Activated T-helper 1 cell treated with anti-CD3 and anti-CD28 coated beads, Interleukin-12 subunit alpha, Interleukin-12 subunit beta, Interleukin-2, Interleukin-4 antibody, amounts not matched to agents 30 ng/mL and 10 ng/mL and 1 ng/mL, durations not matched to agents 14 hours and 24 hours and 36 hours (primary cell): ENCODE measurements at regions of chr17 and their contacts with region 1.

Region 1: DNA sequence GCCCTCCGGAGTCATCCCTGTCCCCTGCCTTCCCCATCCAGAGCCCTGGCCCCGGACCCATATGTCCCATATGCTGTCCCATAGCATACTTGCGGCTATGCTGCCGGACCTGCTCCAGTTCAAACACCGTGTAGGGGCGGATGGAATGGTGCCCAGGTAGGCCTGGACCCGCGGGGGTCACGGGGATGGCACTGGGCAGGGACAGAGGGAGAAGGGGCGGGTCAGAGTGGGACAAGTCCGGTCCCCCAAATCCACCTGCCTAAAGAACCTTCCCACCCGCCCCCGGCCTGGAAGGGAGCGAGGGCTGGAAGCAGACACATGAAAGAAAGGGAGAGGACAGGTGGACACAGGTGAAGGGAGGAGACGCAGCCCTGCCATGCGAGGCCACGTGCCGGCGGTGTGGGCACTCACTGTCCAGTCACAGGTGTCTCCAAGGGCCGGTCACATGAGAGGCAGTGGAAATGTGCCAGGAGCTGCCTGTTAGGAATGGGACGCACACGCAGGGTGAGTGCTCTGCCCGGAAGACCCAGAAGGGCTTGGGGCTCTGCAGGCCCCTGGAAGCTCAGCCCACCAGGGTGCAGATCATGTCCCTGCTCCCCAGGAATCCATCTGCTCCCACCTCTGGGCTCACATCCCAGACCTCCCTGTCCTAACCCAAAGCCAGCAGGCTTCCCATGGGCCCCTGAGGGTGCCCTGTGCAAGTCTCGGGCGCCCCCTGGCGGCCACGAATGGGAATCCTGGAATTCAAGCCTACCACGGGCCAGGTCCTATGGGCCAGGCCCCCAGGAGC is 14.0 kb downstream of the UBALD2 start:
- DNase-seq: peak; percentile 76
- H3K4me3 Mint-ChIP-seq: no peak overlapping the region
- H3K27ac Mint-ChIP-seq: no peak overlapping the region
- H3K4me1 Mint-ChIP-seq: peaks cover under 1% of the 10 kb centered on the region
- H3K27me3 Mint-ChIP-seq: no peaks in the 10 kb centered on the region

Region 2: GRCh38 chr17:75904749-75905521 is 374.2 kb before region 1 on chr17 and contains the start of gene MRPL38:
- intact Hi-C with region 1: loop called (anchors 10 kb)
- DNase-seq: peak; percentile 96
- H3K4me3 Mint-ChIP-seq: peak within 1 kb of the TSS; percentile 99
- H3K27ac Mint-ChIP-seq: peak within 1 kb of the TSS; percentile 84
- H3K4me1 Mint-ChIP-seq: peaks cover 12% of the 10 kb centered on the region
- H3K27me3 Mint-ChIP-seq: no peaks in the 10 kb centered on the region
- total RNA-seq, gene MRPL38: 151 and 160 TPM in 2 replicates

Region 3: GRCh38 chr17:76014184-76014924 is 264.8 kb before region 1 on chr17:
- intact Hi-C with region 1: loop called (anchors 1 kb)
- DNase-seq: peak; percentile 67
- H3K4me3 Mint-ChIP-seq: no peak overlapping the region
- H3K27ac Mint-ChIP-seq: no peak overlapping the region
- H3K4me1 Mint-ChIP-seq: no peaks in the 10 kb centered on the region
- H3K27me3 Mint-ChIP-seq: peaks cover 2% of the 10 kb centered on the region

Region 4: DNA sequence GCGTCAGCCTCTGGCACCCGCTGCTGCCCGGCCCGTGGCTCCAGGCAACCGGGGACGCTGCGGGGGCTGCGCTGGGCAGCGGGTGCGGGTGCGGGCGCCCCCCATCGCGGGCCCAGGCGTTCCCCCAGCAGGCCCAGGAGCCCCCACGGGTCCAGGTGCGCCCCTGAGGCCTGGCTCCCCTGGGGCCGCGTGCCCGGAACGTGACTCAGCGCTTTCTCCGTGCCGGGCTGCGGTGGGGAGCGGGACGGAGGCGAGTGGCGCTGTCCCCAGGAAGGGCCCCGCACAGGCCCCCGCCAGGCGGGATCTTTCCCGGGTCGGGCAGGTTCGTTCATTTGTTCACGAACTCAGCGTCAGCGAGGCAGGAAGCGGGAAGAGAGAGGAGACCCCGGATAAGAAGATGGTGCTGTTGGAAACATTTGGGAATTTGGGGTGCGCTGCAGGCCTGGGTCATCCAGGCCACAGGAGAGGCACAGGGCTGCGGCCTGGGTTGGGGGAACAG is 157.2 kb before region 1 on chr17:
- intact Hi-C with region 1: loop called (anchors 1 kb)
- DNase-seq: no peak
- H3K4me3 Mint-ChIP-seq: peak overlapping the region; percentile 39
- H3K27ac Mint-ChIP-seq: no peak overlapping the region
- H3K4me1 Mint-ChIP-seq: peaks cover 17% of the 10 kb centered on the region
- H3K27me3 Mint-ChIP-seq: peaks cover 5% of the 10 kb centered on the region

Region 5: DNA sequence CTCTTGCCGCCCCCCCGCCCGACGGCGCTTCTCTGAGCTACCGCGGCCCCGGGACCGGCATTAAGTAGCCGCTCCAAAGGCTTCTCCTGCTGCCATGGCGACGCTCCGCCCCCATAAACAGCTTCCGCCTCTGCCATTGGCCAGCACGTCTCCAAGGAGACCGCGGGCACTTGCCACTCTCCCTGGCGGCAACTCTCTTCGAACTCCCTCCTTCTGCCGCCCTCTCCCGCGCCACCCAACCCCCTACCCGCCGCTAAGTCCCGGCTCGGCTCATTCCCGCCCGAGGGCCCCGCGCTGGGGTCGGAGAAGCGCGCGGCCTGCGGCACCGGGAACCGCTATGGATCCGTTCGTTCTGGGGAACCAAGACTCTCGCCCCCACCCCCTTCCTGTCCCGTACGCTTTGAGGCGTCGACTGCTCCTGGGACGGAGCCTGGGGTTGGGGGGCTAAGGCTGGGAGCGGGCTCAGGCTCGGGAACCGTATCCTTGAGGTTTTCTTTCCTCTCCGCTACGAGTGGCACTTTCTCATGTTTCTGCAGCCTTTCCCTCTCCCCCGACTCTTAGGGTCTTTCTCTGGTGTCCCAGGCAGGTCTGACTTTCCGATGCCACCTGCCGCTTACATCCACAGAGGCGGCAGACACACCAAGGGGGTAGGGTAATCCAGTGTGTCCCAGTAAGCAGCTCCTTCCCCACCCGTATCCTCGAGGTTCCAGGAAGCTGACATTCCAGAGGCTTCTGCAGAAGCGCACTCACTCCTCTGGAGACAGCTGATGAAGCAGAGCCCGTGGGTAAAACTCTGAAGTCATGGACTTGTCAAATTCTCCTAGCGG is 137.7 kb before region 1 on chr17 and contains the start of gene FOXJ1:
- intact Hi-C with region 1: loop called (anchors 1 kb)
- DNase-seq: peak; percentile 91
- H3K4me3 Mint-ChIP-seq: peak within 1 kb of the TSS; percentile 74
- H3K27ac Mint-ChIP-seq: peak within 1 kb of the TSS; percentile 65
- H3K4me1 Mint-ChIP-seq: peaks cover 53% of the 10 kb centered on the region
- H3K27me3 Mint-ChIP-seq: peaks cover 14% of the 10 kb centered on the region
- total RNA-seq, gene FOXJ1: 0.10 TPM in 1 of 2 replicates, not detected in the other

Region 6: DNA sequence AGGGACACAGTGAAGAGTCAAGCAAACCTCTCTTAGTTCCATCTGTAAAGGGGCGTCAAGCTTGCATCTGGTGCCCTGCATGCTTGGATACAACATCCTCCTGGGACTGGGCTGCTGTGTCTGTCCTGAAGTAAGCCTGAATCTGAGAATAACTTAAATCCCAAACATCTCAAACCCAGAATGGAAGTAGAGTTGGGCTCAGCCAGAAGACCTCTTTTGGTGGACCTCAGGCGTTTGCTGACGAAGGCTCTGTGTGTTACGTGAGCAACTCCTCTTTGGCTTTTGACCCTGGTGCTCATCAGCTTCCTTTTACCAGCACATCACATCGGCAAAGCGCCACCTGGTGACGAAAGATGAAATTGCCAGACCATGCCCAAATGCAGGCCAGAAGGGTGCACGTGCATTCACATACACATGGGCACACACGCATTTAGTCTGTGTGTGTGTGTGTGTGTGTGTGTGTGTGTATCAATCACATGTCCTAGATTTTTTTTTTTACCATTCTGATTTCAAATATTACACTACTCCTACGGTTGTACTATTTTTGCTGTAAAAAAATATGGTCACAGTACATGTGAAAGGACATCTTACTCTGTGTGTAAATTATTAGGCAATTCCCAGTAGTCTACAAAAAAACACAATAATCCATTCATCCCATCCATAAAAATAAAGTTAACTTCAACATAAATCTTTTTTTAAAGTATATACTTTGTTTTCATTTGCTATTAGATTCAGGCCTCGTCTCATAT is 97.0 kb before region 1 on chr17:
- intact Hi-C with region 1: loop called (anchors 1 kb)
- DNase-seq: peak; percentile 90
- H3K4me3 Mint-ChIP-seq: peak overlapping the region; percentile 53
- H3K27ac Mint-ChIP-seq: peak overlapping the region; percentile 87
- H3K4me1 Mint-ChIP-seq: peaks cover 64% of the 10 kb centered on the region
- H3K27me3 Mint-ChIP-seq: no peaks in the 10 kb centered on the region

Region 7: DNA sequence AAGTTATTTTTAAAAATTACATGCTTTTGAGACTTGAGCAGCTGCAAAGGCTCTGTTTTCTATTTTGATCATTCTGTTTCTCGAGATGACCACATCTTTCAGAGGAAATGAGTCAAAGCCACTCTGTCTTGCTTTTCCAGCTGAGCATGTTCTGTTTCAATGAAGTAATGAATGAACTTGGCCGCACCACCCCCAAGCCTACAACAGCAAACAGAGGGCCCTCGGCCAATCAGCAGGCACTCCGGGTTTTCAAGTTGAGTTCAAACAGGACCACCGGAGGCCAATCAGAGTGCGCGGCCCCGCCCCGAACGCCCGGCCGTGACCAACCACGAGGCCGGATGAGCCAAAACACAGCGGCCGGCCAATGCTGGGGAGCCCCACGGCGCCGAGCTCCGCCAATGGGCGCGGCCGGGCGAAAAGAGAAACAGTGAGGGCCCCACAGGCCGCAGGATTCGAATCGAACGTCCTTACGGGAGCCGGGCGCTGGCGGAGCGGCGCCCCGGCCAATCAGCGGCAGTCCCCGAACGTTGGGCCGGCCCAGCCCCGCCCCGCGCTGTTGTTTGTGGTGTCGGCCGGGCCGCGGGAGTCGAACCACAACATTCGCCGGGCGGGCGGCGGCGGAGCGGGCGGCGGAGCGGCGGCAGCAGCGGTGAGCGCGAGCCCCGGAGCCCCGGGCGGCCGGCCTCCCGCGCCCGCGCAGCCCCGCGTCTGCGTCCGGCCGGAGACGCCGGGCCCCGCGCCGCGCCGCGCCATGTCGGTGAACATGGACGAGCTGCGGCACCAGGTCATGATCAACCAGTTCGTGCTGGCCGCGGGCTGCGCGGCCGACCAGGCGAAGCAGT is 14.2 kb before region 1 on chr17 and contains the start of gene UBALD2:
- intact Hi-C with region 1: no loop called
- DNase-seq: peak; percentile 99
- H3K4me3 Mint-ChIP-seq: peak within 1 kb of the TSS; percentile 94
- H3K27ac Mint-ChIP-seq: peak within 1 kb of the TSS; percentile 94
- H3K4me1 Mint-ChIP-seq: peaks cover 63% of the 10 kb centered on the region
- H3K27me3 Mint-ChIP-seq: no peaks in the 10 kb centered on the region
- total RNA-seq, gene UBALD2: 206 and 217 TPM in 2 replicates

Region 8: DNA sequence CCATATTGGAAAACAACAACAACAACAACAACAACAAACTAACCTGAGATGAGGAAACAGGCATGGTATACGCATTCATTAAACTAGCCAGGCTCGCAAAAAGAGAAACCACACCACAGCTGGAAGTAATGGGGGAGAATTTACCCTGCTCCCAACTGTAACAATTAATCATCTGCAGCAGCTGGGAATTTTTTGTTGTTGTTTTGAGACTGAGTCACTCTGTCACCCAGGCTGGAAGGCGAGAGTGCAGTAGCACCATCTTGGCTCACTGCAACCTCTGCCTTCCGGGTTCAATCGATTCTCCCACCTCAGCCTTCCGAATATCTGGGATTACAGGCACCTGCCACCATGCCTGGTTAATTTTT is 58.2 kb after region 1 on chr17:
- intact Hi-C with region 1: no loop called
- DNase-seq: no peak
- H3K4me3 Mint-ChIP-seq: no peak overlapping the region
- H3K27ac Mint-ChIP-seq: no peak overlapping the region
- H3K4me1 Mint-ChIP-seq: peaks cover 5% of the 10 kb centered on the region
- H3K27me3 Mint-ChIP-seq: no peaks in the 10 kb centered on the region